Mucosa of descending colon (tissue), 3 donors: ENCODE measurements at regions of chr3 and their contacts with region 1.

Region 1: GRCh38 chr3:46705022-46705530 is 3.9 kb downstream of the TMIE start:
- DNase-seq: peak; percentile 68 to 83 (median 80)
- ATAC-seq: peak; percentile 89
- H3K4me3 ChIP-seq: no peak overlapping the region
- H3K4me1 ChIP-seq: no peaks in the 10 kb centered on the region
- CTCF ChIP-seq: peak; percentile 86

Region 2: GRCh38 chr3:46469680-46470357 is 235.3 kb before region 1 on chr3:
- intact Hi-C with region 1: no loop called
- DNase-seq: no peak
- ATAC-seq: no peak
- H3K4me3 ChIP-seq: no peak overlapping the region
- H3K4me1 ChIP-seq: no peaks in the 10 kb centered on the region
- CTCF ChIP-seq: no peak

Region 3: GRCh38 chr3:46845791-46846623 is 140.9 kb after region 1 on chr3:
- intact Hi-C with region 1: loop called in 1 of 2 experiments (anchors 10 kb)
- DNase-seq: peak; percentile 73 to 86 (median 82)
- ATAC-seq: peak; percentile 83
- H3K4me3 ChIP-seq: peak overlapping the region; percentile 28
- H3K4me1 ChIP-seq: peaks cover 5% of the 10 kb centered on the region
- CTCF ChIP-seq: no peak

Region 4: DNA sequence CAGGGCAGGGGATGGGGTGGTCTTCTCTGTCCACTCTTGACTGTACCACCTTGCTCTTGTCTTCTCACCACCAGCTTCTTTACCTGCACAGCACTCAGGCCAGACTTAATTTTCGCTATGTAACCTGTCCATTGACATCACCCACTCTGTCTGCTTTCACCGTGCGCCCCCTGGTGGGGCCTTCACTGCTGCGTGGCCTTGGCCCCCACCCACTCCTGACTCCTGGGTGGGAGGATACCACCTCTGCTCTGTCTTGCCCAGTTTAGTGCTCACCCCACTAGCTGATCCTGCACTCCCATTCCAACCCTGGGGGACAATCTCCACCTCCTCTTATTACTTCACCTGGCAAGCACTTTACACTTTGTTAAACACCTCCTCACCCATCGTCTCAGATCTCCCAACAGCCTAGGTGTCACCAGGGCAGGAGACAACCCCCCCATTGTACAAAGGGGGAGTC is 190.2 kb after region 1 on chr3:
- intact Hi-C with region 1: loop called in 1 of 2 experiments (anchors 10 kb)
- DNase-seq: peak; percentile 57 to 86 (median 81)
- ATAC-seq: peak; percentile 50
- H3K4me3 ChIP-seq: no peak overlapping the region
- H3K4me1 ChIP-seq: peaks cover 10% of the 10 kb centered on the region
- CTCF ChIP-seq: peak; percentile 69

Region 5: GRCh38 chr3:46909535-46910442 is 204.7 kb after region 1 on chr3:
- intact Hi-C with region 1: loop called in 1 of 2 experiments (anchors 5 kb)
- DNase-seq: peak; percentile 77 to 83 (median 82)
- ATAC-seq: peak; percentile 83
- H3K4me3 ChIP-seq: no peak overlapping the region
- H3K4me1 ChIP-seq: peaks cover 3% of the 10 kb centered on the region
- CTCF ChIP-seq: peak; percentile 77

Region 6: DNA sequence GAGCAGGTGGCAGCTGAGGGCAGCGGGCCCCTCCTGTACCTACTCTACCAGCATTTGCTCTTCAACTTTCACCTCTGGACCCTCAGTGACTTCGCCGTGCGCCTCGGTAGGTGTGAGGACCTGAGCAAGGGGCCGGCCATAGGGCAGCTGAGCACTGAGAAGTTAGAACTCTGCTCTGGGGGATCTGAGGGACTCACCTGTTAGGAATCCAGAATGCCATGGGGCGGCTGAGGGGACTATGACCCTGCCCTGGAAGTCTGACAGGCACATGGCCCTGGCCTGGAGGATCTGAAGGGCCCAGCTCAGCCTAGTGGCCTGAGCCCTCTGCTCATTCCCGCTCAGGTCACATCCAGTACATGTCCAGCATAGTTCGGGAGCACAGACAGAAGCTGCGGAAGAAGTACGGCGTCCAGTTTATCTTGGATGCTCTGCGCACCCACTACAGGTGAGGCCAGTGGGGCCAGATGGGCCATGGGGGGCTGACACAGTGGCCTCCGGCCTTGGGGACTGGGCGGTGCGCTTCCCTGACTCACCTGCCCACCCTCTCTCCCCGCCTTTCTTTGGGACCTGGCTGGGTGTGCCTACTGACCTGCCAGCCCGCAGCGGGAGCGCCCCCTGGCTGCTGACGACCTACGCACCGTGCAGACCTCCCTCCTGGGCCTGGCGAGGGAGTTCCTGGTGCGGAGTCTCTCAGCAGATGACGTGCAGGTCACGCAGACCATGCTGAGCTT is 293.2 kb after region 1 on chr3:
- intact Hi-C with region 1: loop called in 1 of 2 experiments (anchors 10 kb)
- DNase-seq: peak; percentile 82 to 91 (median 89)
- ATAC-seq: peak; percentile 87
- H3K4me3 ChIP-seq: no peak overlapping the region
- H3K4me1 ChIP-seq: no peaks in the 10 kb centered on the region
- CTCF ChIP-seq: peak; percentile 78